Caki2 (cell line): ENCODE measurements at regions of chr1 and their contacts with region 1.

Region 1: DNA sequence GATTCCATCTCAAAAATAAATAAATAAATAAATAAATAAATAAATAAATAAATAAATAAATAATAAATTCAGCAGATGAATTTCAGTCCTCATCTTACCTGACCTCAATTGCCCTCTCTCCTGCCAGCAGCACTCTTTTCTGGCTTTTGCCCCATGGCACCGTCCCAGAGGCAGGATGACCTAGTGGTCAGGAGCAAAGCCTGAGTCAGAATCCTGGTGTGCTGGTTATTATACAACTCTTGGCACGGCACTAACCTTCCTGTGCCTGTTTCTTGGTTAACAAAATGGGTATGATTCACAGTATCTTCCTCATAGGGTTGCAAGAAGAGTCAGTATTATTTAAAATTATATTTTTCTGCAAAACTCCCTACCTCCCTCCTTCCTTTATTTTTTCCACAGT is 43.0 kb downstream of the NKAIN1 start:
- DNase-seq: no peak

Region 2: DNA sequence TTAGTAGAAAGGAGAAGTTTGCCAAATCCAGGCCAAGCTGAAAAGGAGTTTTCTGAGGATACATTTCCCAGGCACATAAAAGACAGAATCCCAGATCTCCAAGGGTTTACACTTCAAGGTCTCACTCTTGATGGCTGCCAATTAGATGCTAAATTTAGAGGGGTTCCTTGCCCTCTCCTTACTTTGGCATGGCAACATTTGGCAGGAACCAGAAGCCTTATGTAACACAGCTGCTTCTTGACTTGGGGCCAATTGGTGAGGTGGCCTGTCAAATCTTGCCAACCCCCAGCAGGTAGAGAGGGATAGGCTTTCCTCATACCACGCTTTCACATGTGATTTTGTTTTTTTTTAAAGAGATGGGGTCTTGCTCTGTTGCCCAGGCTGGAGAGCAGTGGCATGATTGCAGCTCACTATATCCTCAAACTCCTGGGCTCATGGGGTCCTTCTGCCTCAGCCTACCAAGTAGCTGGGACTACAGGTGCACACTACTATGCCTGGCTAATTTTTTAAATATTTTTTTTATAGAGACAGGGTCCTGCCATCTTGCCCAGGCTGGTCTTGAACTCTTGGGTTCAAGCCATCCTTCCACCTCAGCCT is 68.2 kb after region 1 on chr1:
- in situ Hi-C with region 1: loop called (anchors 10 kb)
- DNase-seq: no peak